Activated CD4-positive, alpha-beta memory T cell treated with anti-CD3 and anti-CD28 coated beads for 36 hours (primary cell): ENCODE measurements at regions of chr19 and their contacts with region 1.

Region 1: GRCh38 chr19:15177269-15178116 is 23.3 kb downstream of the NOTCH3 start:
- DNase-seq: peak; percentile 87
- H3K4me3 Mint-ChIP-seq: no peak overlapping the region
- H3K27ac Mint-ChIP-seq: no peak overlapping the region
- H3K4me1 Mint-ChIP-seq: peaks cover 4% of the 10 kb centered on the region
- H3K27me3 Mint-ChIP-seq: peaks cover 4% of the 10 kb centered on the region

Region 2: GRCh38 chr19:15166700-15167099 is 10.8 kb before region 1 on chr19:
- CTCF ChIA-PET with region 1: interaction called, 13 read pairs
- POLR2A ChIA-PET with region 1: no interaction called
- intact Hi-C with region 1: no loop called
- DNase-seq: no peak
- H3K4me3 Mint-ChIP-seq: no peak overlapping the region
- H3K27ac Mint-ChIP-seq: no peak overlapping the region
- H3K4me1 Mint-ChIP-seq: no peaks in the 10 kb centered on the region
- H3K27me3 Mint-ChIP-seq: no peaks in the 10 kb centered on the region

Region 3: GRCh38 chr19:15188851-15189250 is 11.4 kb after region 1 on chr19:
- CTCF ChIA-PET with region 1: no interaction called
- POLR2A ChIA-PET with region 1: no interaction called
- intact Hi-C with region 1: no loop called
- DNase-seq: no peak
- H3K4me3 Mint-ChIP-seq: no peak overlapping the region
- H3K27ac Mint-ChIP-seq: no peak overlapping the region
- H3K4me1 Mint-ChIP-seq: no peaks in the 10 kb centered on the region
- H3K27me3 Mint-ChIP-seq: peaks cover 18% of the 10 kb centered on the region

Region 4: GRCh38 chr19:15199921-15200887 is 22.7 kb after region 1 on chr19:
- CTCF ChIA-PET with region 1: no interaction called
- POLR2A ChIA-PET with region 1: no interaction called
- intact Hi-C with region 1: no loop called
- DNase-seq: no peak
- H3K4me3 Mint-ChIP-seq: no peak overlapping the region
- H3K27ac Mint-ChIP-seq: no peak overlapping the region
- H3K4me1 Mint-ChIP-seq: peaks cover 8% of the 10 kb centered on the region
- H3K27me3 Mint-ChIP-seq: peaks cover 45% of the 10 kb centered on the region

Region 5: GRCh38 chr19:15251749-15252397 is 74.4 kb after region 1 on chr19:
- CTCF ChIA-PET with region 1: no interaction called
- POLR2A ChIA-PET with region 1: no interaction called
- intact Hi-C with region 1: loop called (anchors 5 kb)
- DNase-seq: no peak
- H3K4me3 Mint-ChIP-seq: no peak overlapping the region
- H3K27ac Mint-ChIP-seq: no peak overlapping the region
- H3K4me1 Mint-ChIP-seq: no peaks in the 10 kb centered on the region
- H3K27me3 Mint-ChIP-seq: no peaks in the 10 kb centered on the region